Activated CD8-positive, alpha-beta memory T cell treated with anti-CD3 and anti-CD28 coated beads, Interleukin-2, amount 10 ng/mL, durations not matched to agents 7 days and 5 days (primary cell): ENCODE measurements at regions of chr20 and their contacts with region 1.

Region 1: DNA sequence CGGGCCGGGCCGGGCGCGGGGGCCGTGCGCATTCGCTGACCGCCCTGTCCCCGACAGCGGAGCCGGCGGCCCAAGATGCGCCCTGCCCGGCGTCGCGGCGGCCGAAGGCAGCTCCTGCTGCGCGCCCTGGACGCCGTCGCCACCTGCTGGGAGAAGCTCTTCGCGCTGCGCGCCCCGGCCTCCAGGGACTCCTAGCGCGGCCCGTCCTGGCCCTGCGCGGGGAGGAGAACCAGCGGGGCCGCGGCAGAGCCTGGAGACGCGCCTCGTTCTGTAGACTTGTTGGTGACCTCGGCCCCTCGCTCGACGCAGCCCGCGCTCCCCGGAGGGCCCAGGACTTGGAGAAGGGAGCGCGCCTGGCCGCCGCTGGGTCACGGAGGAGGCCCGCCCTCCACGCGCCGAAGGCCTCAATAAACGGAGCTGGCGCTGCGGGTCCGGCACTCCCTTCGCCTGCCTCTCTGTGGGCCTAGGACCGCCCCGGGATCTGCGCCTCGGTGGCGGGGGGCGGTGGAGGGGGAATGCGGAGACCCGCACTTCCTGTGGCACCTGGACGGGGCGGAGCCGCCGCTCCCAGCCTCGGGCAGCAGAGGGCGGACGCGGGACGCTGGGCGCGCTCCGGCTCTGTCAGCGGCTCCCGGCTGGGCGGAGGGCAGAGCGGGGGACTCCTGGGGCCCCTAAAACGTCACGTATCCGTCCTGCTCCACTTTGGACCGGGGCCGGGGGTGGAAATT is 2.7 kb downstream of the C20orf204 start:
- DNase-seq: peak; percentile 86
- ATAC-seq: peak; percentile 66
- H3K4me3 Mint-ChIP-seq: peak overlapping the region; percentile 71
- H3K27ac Mint-ChIP-seq: peak overlapping the region; percentile 68
- H3K4me1 Mint-ChIP-seq: peaks cover 70% of the 10 kb centered on the region
- H3K27me3 Mint-ChIP-seq: peaks cover 2% of the 10 kb centered on the region

Region 2: DNA sequence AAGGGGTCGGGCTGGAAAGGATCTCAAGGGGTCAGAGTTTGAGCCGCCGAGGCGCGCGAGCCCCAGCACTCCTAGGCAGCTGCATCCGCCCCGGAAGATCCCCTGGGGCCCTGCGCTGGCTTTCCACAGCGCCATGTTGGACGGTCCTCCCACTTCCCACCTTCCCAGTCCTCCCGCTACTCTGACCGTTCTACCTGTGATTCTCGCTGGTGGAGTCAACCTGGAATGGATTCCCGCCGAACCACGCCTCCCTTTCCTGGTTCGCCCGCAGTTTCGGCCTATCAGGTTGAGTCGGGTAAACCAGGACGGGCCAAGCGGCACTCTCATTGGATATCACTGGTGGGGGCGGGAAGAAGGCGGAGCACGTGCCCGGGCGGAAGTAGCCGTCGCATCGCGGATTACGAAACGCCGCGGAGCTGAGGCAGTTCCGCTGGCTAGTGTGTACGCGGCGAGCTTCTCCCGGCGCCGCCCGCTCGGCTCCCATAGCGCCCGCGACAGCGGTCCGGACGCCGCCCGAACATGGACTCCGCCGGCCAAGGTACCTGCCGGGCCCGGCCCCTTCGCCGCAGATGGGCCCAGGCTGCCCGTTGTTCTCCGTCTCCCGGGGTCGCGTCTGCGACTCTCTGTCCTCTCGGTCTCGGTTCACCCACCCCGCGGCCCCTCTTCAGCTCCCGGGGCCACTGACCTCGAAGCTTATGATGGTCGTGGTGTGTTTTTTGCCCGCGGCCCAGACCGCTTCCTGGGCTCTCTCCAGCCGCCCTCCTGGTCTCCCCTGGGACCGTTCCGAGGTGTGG is 173.7 kb before region 1 on chr20 and contains the start of gene TPD52L2:
- CTCF ChIA-PET with region 1: interaction called, 16 read pairs
- DNase-seq: peak; percentile 99
- ATAC-seq: peak; percentile 91
- H3K4me3 Mint-ChIP-seq: peak within 1 kb of the TSS; percentile 82
- H3K27ac Mint-ChIP-seq: peak within 1 kb of the TSS; percentile 84
- H3K4me1 Mint-ChIP-seq: peaks cover 24% of the 10 kb centered on the region
- H3K27me3 Mint-ChIP-seq: no peaks in the 10 kb centered on the region
- total RNA-seq, gene TPD52L2: 33.5 to 46.2 TPM

Region 3: GRCh38 chr20:63973636-63974402 is 64.9 kb before region 1 on chr20:
- CTCF ChIA-PET with region 1: interaction called, 190 read pairs
- DNase-seq: peak; percentile 80
- ATAC-seq: peak; percentile 40
- H3K4me3 Mint-ChIP-seq: no peak overlapping the region
- H3K27ac Mint-ChIP-seq: peak overlapping the region; percentile 70
- H3K4me1 Mint-ChIP-seq: peaks cover 42% of the 10 kb centered on the region
- H3K27me3 Mint-ChIP-seq: peaks cover 3% of the 10 kb centered on the region

Region 4: DNA sequence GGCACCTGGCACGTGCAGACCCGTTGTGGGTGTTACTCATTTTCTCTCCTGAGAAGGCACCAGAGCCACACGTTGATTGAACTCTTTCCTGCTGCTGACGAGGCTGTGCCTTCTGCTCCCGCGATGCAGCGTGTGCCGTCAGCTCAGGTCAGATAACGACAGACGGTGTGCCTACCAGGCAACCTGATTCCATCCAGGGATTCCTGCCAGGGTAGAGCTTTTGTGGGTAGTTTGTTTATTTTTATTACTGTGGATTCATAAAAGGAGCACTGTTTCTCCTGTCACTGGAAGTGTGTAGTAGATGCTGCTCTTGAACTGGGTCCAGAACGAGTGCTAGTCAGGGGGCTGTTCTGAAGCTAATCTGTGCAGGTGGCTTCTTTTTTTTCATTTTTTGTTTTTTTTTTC is 37.1 kb before region 1 on chr20:
- CTCF ChIA-PET with region 1: interaction called, 20 read pairs
- DNase-seq: no peak
- ATAC-seq: no peak
- H3K4me3 Mint-ChIP-seq: no peak overlapping the region
- H3K27ac Mint-ChIP-seq: peak overlapping the region; percentile 1
- H3K4me1 Mint-ChIP-seq: peaks cover under 1% of the 10 kb centered on the region
- H3K27me3 Mint-ChIP-seq: no peaks in the 10 kb centered on the region

Region 5: GRCh38 chr20:64053841-64054661 is 15.3 kb after region 1 on chr20:
- CTCF ChIA-PET with region 1: interaction called, 133 read pairs
- DNase-seq: no peak
- ATAC-seq: no peak
- H3K4me3 Mint-ChIP-seq: no peak overlapping the region
- H3K27ac Mint-ChIP-seq: no peak overlapping the region
- H3K4me1 Mint-ChIP-seq: peaks cover 30% of the 10 kb centered on the region
- H3K27me3 Mint-ChIP-seq: peaks cover 19% of the 10 kb centered on the region

Region 6: GRCh38 chr20:64079273-64080012 is 40.7 kb after region 1 on chr20 and contains the start of gene RGS19:
- CTCF ChIA-PET with region 1: interaction called, 35 read pairs
- DNase-seq: peak; percentile 85
- ATAC-seq: peak; percentile 52
- H3K4me3 Mint-ChIP-seq: peak within 1 kb of the TSS; percentile 87
- H3K27ac Mint-ChIP-seq: peak within 1 kb of the TSS; percentile 88
- H3K4me1 Mint-ChIP-seq: peaks cover 40% of the 10 kb centered on the region
- H3K27me3 Mint-ChIP-seq: peaks cover 12% of the 10 kb centered on the region
- total RNA-seq, gene RGS19: 84.5 to 119 TPM

Region 7: DNA sequence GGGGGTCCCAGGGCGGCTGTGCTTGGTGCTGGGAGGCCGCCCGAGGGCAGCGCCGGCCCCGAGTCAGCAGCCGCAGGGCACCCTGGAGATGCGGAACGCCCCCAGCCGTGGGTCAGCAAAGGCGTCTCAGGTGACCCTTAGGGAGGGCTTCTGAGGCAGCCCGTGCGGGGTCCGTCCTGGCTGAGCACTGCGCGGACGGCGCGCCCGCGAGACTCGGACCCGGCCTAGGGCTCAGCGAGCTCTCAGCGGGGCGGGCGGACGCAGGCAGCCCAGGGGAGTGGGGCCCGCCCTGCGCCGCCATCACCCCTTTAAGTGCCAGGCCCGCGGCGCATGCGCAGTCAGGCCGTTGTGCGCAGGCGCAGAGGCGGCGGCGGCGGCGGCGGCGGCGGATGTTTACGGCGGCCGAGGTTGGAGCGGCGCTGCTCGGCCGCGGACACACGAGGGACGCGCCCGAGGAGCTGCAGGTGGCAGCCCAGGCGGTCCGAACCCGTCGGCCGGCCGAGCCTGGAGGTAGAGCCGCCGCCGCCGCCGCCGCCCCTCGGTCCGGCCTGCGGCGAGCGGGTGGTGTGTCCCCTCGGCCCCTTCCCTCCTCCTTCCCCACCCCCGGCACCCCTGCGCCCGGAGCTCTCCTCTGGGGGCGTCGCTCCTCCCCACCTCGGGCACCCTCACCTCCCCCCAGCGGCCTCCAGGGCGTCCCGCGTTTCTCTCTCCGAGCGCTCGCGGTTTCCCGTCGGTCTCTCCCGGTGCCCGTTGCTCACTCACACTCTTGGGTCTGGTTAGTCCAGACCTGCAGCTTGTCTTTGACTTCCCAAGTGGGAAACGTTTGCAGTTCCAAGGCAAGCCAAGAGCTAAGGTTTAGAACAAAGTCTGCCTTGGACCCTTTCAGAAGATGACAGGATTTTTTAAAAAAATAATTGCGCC is 216.9 kb after region 1 on chr20 and contains the start of gene PCMTD2:
- CTCF ChIA-PET with region 1: interaction called, 10 read pairs
- DNase-seq: peak; percentile 88
- ATAC-seq: peak; percentile 96
- H3K4me3 Mint-ChIP-seq: peak within 1 kb of the TSS; percentile 79
- H3K27ac Mint-ChIP-seq: peak within 1 kb of the TSS; percentile 82
- H3K4me1 Mint-ChIP-seq: peaks cover 32% of the 10 kb centered on the region
- H3K27me3 Mint-ChIP-seq: peaks cover 7% of the 10 kb centered on the region
- total RNA-seq, gene PCMTD2: 28.1 to 38.5 TPM